IMR-90 (cell line): ENCODE measurements at regions of chr3 and their contacts with region 1.

Region 1: DNA sequence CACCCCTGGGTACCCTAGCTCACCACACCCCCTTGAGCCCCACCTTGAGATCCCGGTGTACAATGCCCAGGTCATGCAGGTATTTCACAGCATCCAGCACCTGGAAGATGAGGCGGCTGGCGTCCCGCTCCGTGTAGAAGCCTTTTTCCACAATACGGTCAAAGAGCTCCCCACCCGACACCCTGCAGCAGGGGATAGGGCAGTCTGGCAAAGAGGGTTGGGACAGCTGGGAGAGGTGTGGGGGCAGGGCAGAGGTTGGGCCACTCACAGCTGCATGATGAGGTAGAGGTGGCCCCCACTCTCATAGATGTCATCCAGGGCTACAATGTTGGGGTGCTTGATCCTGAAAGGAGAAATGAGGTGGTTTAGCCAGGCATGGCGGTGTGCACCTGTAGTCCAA is 6.9 kb downstream of the CAMK1 start:
- DNase-seq: no peak
- ATAC-seq: no peak
- H3K4me3 ChIP-seq: no peak overlapping the region
- H3K27ac ChIP-seq: no peak overlapping the region
- H3K4me1 ChIP-seq: peaks cover 7% of the 10 kb centered on the region
- H3K27me3 ChIP-seq: no peaks in the 10 kb centered on the region
- CTCF ChIP-seq: no peak
- POLR2A ChIP-seq: no peak
- RAD21 ChIP-seq: no peak

Region 2: DNA sequence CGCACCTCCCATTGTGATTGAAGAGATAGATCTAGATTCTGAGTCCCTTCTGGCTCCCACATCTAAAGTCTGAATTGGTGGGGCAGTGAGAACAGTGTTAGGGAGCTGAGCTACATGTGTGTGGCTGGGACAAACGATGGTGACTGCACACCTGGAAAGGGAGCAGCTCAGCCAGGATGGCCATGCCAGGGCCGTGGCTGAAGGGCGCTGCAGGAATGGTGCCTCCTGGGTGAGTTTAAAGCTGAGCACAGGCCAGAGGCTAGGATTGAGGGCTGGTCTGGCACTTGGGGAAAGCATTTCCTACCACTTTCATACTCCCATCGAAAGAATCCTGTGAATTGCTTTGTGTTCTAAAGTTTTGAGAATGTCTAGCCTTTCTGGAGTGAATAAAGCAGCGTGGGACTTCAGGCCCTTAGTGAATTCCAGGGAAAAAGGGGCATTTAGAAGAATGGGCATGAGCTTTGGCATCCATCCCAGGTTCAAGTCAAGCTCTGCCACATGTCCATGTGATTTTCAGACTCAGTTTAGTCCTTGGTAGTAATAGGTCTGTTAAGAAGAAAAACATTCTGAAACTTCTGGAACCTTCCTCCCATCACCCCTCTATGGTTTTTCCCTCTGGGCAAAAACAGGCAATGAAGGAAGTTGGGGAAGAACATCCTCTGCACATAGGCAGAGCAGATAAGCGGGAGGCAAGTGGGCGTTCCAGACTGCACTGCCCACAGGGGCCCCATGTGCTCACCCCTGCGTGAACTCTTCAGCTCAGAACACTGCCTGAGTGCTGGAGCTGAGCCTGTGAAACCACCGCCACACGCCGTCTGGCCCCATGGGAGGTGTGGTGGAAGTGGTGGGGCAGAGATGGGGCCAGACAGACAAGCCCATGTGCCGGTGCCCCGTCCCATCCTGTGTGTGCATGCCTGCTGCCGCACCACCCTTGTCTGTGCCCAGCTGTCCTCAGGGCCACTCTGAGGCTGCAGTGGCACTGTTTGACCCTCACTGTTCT is 72.1 kb before region 1 on chr3:
- CTCF ChIA-PET with region 1: no interaction called
- POLR2A ChIA-PET with region 1: no interaction called
- dilution Hi-C with region 1: no loop called
- in situ Hi-C with region 1: no loop called
- intact Hi-C with region 1: no loop called
- DNase-seq: no peak
- ATAC-seq: peak; percentile 17
- H3K4me3 ChIP-seq: no peak overlapping the region
- H3K27ac ChIP-seq: no peak overlapping the region
- H3K4me1 ChIP-seq: no peaks in the 10 kb centered on the region
- H3K27me3 ChIP-seq: no peaks in the 10 kb centered on the region
- CTCF ChIP-seq: no peak
- POLR2A ChIP-seq: no peak
- RAD21 ChIP-seq: no peak

Region 3: GRCh38 chr3:9727041-9727595 is 35.8 kb before region 1 on chr3:
- CTCF ChIA-PET with region 1: no interaction called
- POLR2A ChIA-PET with region 1: no interaction called
- dilution Hi-C with region 1: no loop called
- in situ Hi-C with region 1: no loop called
- intact Hi-C with region 1: no loop called
- DNase-seq: no peak
- ATAC-seq: no peak
- H3K4me3 ChIP-seq: no peak overlapping the region
- H3K27ac ChIP-seq: no peak overlapping the region
- H3K4me1 ChIP-seq: no peaks in the 10 kb centered on the region
- H3K27me3 ChIP-seq: no peaks in the 10 kb centered on the region; the same call in 1 of the 2 replicates
- CTCF ChIP-seq: no peak; the same call in 1 of the 2 replicates
- POLR2A ChIP-seq: no peak
- RAD21 ChIP-seq: no peak

Region 4: GRCh38 chr3:9749645-9750555 is 13.0 kb before region 1 on chr3 and contains the start of gene OGG1:
- CTCF ChIA-PET with region 1: no interaction called
- POLR2A ChIA-PET with region 1: interaction called, 16 read pairs
- dilution Hi-C with region 1: no loop called
- in situ Hi-C with region 1: no loop called
- intact Hi-C with region 1: no loop called
- DNase-seq: peak; percentile 98
- ATAC-seq: peak; percentile 94
- H3K4me3 ChIP-seq: peak within 1 kb of the TSS; percentile 64
- H3K27ac ChIP-seq: peak within 1 kb of the TSS; percentile 90
- H3K4me1 ChIP-seq: peaks cover 20% of the 10 kb centered on the region
- H3K27me3 ChIP-seq: no peaks in the 10 kb centered on the region
- CTCF ChIP-seq: no peak
- POLR2A ChIP-seq: peak; percentile 27; the same call in 1 of the 2 replicates
- RAD21 ChIP-seq: no peak
- total RNA-seq, gene OGG1: 14.9 and 15.8 TPM in 2 replicates

Region 5: GRCh38 chr3:9970020-9970687 is 207.3 kb after region 1 on chr3:
- CTCF ChIA-PET with region 1: no interaction called
- POLR2A ChIA-PET with region 1: no interaction called
- dilution Hi-C with region 1: no loop called
- in situ Hi-C with region 1: no loop called
- intact Hi-C with region 1: no loop called
- DNase-seq: peak; percentile 83
- ATAC-seq: peak; percentile 89
- H3K4me3 ChIP-seq: no peak overlapping the region
- H3K27ac ChIP-seq: peak overlapping the region; percentile 94
- H3K4me1 ChIP-seq: peaks cover 10% of the 10 kb centered on the region
- H3K27me3 ChIP-seq: no peaks in the 10 kb centered on the region
- CTCF ChIP-seq: no peak
- POLR2A ChIP-seq: no peak
- RAD21 ChIP-seq: no peak